Heart right ventricle (tissue), 16 donors: ENCODE measurements at regions of chrX and their contacts with region 1.

Region 1: DNA sequence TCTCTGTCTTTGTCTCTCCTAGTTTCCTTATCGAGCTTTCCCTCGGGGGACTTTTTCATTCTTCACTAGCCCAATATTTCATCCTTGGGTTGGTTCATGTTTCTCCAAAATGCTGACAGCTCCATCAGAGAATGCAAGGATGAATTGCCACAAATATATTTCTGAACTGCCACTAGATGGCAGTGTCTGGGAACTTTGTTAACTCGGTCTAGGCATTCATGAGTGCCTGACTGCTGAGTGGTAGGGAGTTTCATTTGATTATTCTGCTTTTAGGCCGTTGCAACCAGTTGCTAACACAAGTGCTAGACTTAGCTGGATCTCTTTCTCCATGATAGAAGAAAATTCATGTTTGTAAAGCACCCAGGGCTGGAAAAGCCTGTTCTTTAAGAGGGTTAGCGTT is 73.5 kb upstream of the RAP2C start:
- DNase-seq: peak in 1 of 2 donors; percentile 21
- ATAC-seq: peak in 7 of 8 donors; percentile 49 to 71 (median 61)
- H3K4me3 ChIP-seq: no peak overlapping the region
- H3K27ac ChIP-seq: no peak overlapping the region
- H3K4me1 ChIP-seq: peaks cover 0 to 5% (median 0%) of the 10 kb centered on the region in 9 donors
- H3K27me3 ChIP-seq: no peaks in the 10 kb centered on the region
- CTCF ChIP-seq: peak; percentile 28 to 75 (median 60)

Region 2: GRCh38 chrX:131894987-131895386 is 397.8 kb before region 1 on chrX:
- intact Hi-C with region 1: no loop called
- DNase-seq: no peak
- ATAC-seq: no peak
- H3K4me3 ChIP-seq: no peak overlapping the region
- H3K27ac ChIP-seq: no peak overlapping the region
- H3K4me1 ChIP-seq: no peaks in the 10 kb centered on the region
- H3K27me3 ChIP-seq: peaks cover 0 to 89% (median 0%) of the 10 kb centered on the region in 7 donors
- CTCF ChIP-seq: no peak

Region 3: DNA sequence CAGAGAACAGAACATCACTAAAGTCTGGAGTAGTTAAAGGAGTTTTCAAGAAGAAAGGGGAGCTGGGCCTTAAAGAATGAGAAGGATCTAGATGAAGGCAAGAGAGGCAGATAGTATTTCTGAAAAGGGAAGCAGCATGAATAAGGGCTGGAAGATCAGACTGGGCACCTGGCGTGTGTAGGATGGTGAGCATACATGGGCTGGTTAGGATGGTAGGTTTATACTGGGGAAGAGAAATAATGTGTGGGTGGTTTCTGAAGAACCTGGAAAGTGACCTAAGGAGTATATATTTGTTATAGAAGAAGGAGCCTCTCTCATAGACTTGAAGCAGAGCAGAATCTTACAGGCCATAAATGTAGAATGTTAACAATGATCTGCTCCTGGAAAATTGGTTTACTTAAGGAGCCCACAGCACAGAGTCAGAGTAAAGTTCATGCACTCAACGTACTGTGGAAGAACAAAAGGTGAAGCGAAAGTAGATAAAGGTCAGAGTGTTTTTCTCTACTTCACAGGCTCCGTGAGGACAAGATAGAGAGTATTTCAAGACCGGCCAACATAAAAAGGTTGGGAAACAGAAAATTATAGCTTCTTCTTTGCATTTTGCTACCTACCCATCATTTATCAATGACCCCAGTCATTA is 160.2 kb after region 1 on chrX:
- intact Hi-C with region 1: loop called in 1 of 10 experiments (anchors 10 kb)
- DNase-seq: no peak
- ATAC-seq: no peak
- H3K4me3 ChIP-seq: no peak overlapping the region
- H3K27ac ChIP-seq: no peak overlapping the region
- H3K4me1 ChIP-seq: no peaks in the 10 kb centered on the region
- H3K27me3 ChIP-seq: peaks cover 0 to 22% (median 0%) of the 10 kb centered on the region in 7 donors
- CTCF ChIP-seq: no peak

Region 4: GRCh38 chrX:132592880-132593279 is 300.1 kb after region 1 on chrX:
- intact Hi-C with region 1: loop called in 6 of 10 experiments (anchors 5 to 10 kb)
- DNase-seq: no peak
- ATAC-seq: no peak
- H3K4me3 ChIP-seq: no peak overlapping the region
- H3K27ac ChIP-seq: no peak overlapping the region
- H3K4me1 ChIP-seq: no peaks in the 10 kb centered on the region
- H3K27me3 ChIP-seq: peaks cover 0 to 57% (median 0%) of the 10 kb centered on the region in 7 donors
- CTCF ChIP-seq: peak in 8 of 9 donors; percentile 9 to 50 (median 45)

Region 5: DNA sequence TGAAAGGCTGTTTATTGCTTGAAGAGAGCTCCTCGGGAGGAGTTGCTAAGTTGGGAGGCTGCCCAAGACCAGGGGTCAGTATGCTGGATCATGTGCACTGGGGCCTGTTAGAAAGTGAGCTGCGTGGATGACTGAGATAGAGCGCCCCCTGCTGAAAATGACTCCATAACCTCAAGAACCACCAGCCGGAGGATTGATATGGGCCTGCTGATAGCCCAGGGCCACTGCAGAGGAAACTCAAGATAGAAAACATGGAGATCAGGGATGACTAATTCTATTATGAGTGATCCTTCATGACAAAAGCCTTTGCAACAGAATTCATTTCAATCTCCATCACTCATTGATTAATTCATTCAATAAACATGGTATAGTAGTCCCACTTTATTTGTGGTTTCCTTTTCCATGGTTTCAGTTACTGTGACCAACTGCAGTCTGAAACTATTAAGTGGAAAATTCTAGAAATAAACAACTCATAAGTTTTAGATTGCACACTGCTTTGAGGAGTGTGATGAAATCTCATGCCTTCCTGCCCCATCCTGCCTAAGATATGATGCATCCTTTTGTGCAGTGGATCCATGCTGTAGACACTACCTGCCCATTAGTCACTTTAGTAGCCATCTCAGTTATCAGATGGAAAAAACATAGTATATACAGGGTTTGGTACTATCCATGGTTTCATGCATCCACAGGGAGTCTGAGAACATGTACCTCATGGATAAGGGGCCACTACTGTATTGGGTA is 322.8 kb after region 1 on chrX:
- intact Hi-C with region 1: loop called in 6 of 10 experiments (anchors 5 kb)
- DNase-seq: peak in 1 of 2 donors; percentile 9
- ATAC-seq: no peak
- H3K4me3 ChIP-seq: no peak overlapping the region
- H3K27ac ChIP-seq: no peak overlapping the region
- H3K4me1 ChIP-seq: no peaks in the 10 kb centered on the region
- H3K27me3 ChIP-seq: peaks cover 0 to 39% (median 0%) of the 10 kb centered on the region in 7 donors
- CTCF ChIP-seq: peak in 7 of 9 donors; percentile 30 to 64 (median 38)